ENCODE measurements at regions of chr10 and their contacts with region 1.

Region 1: DNA sequence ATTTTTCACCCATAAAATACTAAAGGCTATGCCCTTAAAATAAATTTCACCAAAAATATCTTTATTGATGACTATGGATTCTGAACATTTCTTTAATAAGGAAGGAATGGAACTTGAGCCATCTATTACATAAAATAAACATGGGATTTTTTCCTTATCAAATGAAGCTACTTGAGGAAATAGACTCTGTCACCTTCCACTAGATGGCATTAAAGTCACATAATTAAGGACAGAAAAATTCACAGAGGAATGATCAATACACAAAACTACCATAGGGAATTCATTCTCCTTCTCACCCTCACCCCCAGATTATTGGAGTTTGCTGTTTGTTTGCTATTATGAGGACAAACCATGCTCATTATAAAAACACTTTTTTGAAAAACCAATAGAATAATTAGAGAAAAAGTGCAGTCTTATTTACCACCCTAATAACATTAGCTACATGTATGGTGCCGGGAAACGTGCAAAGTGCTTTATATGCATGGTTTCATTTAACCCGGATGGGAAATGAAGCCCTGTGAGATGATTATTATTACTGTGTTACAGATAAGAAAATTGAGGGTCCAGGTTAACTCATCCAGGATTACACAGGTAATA is 21.1 kb upstream of the FOXI2 start:
- DNase-seq: peak in 2 of 5 donors; percentile 51 to 64
- H3K4me3 ChIP-seq: no peak overlapping the region
- H3K27ac ChIP-seq: no peak overlapping the region
- H3K4me1 ChIP-seq: no peaks in the 10 kb centered on the region
- H3K27me3 ChIP-seq: no peaks in the 10 kb centered on the region
- CTCF ChIP-seq: peak; percentile 37

Region 2: DNA sequence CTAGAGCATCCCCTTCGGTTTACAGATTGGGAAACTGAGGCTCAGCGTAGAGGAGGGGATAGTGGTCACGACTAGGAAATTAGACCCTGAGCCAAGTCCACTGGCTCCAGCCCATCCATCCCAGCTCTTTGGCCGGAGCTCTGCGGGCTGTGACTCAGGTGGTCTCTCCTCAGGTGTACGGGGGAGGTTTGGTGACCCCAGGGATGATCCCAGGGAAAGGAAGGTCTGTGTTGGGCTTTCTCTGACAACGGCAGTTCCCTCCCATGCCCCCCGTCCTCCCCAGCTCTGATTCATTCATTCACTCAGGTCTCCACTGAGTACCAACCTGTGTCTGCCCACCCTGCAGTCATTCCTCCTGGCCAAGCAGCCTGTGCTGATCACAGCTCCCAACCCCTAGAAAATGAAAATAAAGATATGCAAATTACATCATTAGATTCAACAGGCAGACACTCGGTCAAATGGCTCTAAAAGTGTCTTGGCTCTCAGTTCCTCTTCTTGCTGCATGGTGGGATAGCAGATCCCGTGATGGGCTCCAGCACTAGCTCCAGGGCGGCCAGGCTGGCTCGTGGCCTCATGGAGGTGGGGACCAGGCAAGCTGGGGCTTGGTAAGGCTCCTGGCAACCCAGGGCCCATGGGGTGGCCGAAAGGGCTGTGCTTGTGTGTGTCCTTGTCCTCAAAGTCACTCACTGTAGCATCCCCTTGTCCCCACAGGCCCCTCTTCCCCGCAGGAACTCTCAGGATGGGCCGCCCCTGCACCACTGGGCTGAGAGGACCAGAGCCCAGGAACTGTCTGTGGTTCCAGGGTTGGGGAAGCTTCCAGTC is 139.1 kb after region 1 on chr10:
- intact Hi-C with region 1: loop called (anchors 5 kb)
- DNase-seq: no peak
- H3K4me3 ChIP-seq: no peak overlapping the region
- H3K27ac ChIP-seq: no peak overlapping the region
- H3K4me1 ChIP-seq: no peaks in the 10 kb centered on the region
- H3K27me3 ChIP-seq: no peaks in the 10 kb centered on the region
- CTCF ChIP-seq: no peak

Measured in kidney (tissue), 22 donors.